Calu3 (cell line): ENCODE measurements at regions of chr10 and their contacts with region 1.

Region 1: GRCh38 chr10:74071157-74071556 is 73.2 kb downstream of the VCL start:
- DNase-seq: no peak
- H3K4me3 Mint-ChIP-seq: no peak overlapping the region
- H3K27ac Mint-ChIP-seq: peak overlapping the region; percentile 86
- H3K4me1 Mint-ChIP-seq: peaks cover 85% of the 10 kb centered on the region
- H3K27me3 Mint-ChIP-seq: no peaks in the 10 kb centered on the region
- CTCF ChIP-seq: no peak

Region 2: DNA sequence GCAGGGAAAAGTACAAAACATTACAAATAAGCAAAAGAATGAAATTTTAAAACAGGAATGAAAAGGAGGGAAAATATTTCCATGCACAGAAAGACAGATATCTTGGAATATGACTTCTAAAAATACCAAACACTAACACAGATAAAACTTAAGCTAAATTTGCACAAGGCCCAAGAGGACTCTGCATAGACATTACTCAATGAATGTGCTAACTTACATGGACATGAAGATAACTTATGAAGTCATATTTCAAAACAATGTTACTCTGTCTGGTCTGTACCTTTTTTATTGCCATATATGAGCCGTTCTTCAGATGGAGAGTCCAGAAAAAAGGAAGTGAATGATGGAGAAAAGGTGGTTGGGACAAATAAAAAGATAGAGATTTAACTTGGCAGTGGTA is 622.8 kb before region 1 on chr10:
- CTCF ChIA-PET with region 1: no interaction called
- intact Hi-C with region 1: no loop called
- DNase-seq: no peak
- H3K4me3 Mint-ChIP-seq: no peak overlapping the region
- H3K27ac Mint-ChIP-seq: no peak overlapping the region
- H3K4me1 Mint-ChIP-seq: no peaks in the 10 kb centered on the region
- H3K27me3 Mint-ChIP-seq: no peaks in the 10 kb centered on the region
- CTCF ChIP-seq: no peak

Region 3: GRCh38 chr10:73865459-73866442 is 205.4 kb before region 1 on chr10:
- CTCF ChIA-PET with region 1: no interaction called
- intact Hi-C with region 1: no loop called
- DNase-seq: no peak
- H3K4me3 Mint-ChIP-seq: no peak overlapping the region
- H3K27ac Mint-ChIP-seq: no peak overlapping the region
- H3K4me1 Mint-ChIP-seq: peaks cover 7% of the 10 kb centered on the region
- H3K27me3 Mint-ChIP-seq: no peaks in the 10 kb centered on the region
- CTCF ChIP-seq: no peak

Region 4: GRCh38 chr10:74047868-74048267 is 23.3 kb before region 1 on chr10:
- CTCF ChIA-PET with region 1: interaction called, 11 read pairs
- intact Hi-C with region 1: no loop called
- DNase-seq: peak; percentile 57
- H3K4me3 Mint-ChIP-seq: no peak overlapping the region
- H3K27ac Mint-ChIP-seq: peak overlapping the region; percentile 78
- H3K4me1 Mint-ChIP-seq: peaks cover 62% of the 10 kb centered on the region
- H3K27me3 Mint-ChIP-seq: no peaks in the 10 kb centered on the region
- CTCF ChIP-seq: no peak